ENCODE measurements at regions of chr10 and their contacts with region 1.

Region 1: GRCh38 chr10:102641880-102642735 is 2.2 kb upstream of the TRIM8 start:
- DNase-seq: peak; percentile 98
- H3K4me3 ChIP-seq: peak overlapping the region; percentile 84
- H3K27ac ChIP-seq: peak overlapping the region; percentile 95
- H3K4me1 ChIP-seq: peaks cover 11% of the 10 kb centered on the region
- CTCF ChIP-seq: no peak

Region 2: GRCh38 chr10:101693978-101694673 is 948.0 kb before region 1 on chr10:
- CTCF ChIA-PET with region 1: no interaction called
- POLR2A ChIA-PET with region 1: no interaction called
- intact Hi-C with region 1: loop called (anchors 10 kb)
- DNase-seq: peak; percentile 78
- H3K4me3 ChIP-seq: peak overlapping the region; percentile 81
- H3K27ac ChIP-seq: peak overlapping the region; percentile 75
- H3K4me1 ChIP-seq: peaks cover 28% of the 10 kb centered on the region
- CTCF ChIP-seq: no peak

Region 3: GRCh38 chr10:102132563-102133372 is 509.3 kb before region 1 on chr10 and contains the start of gene PPRC1:
- CTCF ChIA-PET with region 1: no interaction called
- POLR2A ChIA-PET with region 1: no interaction called
- intact Hi-C with region 1: loop called (anchors 5 kb)
- DNase-seq: peak; percentile 99
- H3K4me3 ChIP-seq: peak within 1 kb of the TSS; percentile 87
- H3K27ac ChIP-seq: peak within 1 kb of the TSS; percentile 65
- H3K4me1 ChIP-seq: peaks cover 44% of the 10 kb centered on the region
- CTCF ChIP-seq: peak; percentile 97
- total RNA-seq, gene PPRC1: 29.8 and 47.1 TPM in 2 replicates

Region 4: DNA sequence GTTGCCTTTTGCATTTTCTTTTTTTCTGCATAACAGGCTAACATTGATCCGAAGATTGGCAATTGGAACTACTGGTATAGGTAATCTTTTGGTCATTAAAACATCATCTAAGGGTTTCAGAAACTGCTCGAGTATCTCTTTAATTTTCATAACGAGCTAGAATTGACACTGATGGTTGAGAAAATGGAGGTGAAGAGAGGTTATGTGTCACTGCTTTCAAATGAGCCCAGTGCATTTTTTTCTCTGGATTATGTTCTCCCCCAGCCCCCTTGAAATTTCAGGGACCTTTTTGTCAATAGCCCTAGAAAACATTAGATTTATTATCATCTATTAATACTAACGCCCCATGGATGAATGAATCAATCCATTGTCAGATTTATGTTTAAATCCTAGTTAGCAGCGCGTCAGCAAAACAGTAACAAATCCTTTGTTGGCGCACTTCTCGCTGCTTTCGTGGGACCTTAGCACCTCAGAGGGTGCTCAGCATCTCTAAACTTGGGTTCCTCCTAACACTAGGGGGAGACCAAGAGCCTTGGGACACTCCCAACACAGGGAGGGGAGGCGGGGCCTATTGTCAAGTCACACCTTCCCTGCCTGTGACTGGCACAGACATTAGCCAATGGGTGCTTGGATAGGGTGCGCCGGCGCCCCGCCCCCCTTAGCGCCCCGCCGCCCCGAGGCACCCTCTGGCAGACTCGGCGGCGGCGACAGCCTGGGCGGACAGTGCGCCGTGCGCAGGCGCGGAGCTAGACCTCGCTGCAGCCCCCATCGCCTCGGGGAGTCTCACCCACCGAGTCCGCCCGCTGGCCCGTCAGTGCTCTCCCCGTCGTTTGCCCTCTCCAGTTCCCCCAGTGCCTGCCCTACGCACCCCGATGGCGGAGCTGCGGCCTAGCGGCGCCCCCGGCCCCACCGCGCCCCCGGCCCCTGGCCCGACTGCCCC is 138.6 kb before region 1 on chr10 and contains the start of gene SUFU:
- CTCF ChIA-PET with region 1: no interaction called
- POLR2A ChIA-PET with region 1: interaction called, 3 read pairs
- intact Hi-C with region 1: loop called (anchors 2 kb)
- DNase-seq: peak; percentile 100
- H3K4me3 ChIP-seq: peak within 1 kb of the TSS; percentile 98
- H3K27ac ChIP-seq: peak within 1 kb of the TSS; percentile 64
- H3K4me1 ChIP-seq: peaks cover 20% of the 10 kb centered on the region
- CTCF ChIP-seq: peak; percentile 92
- total RNA-seq, gene SUFU: 1.9 and 4.9 TPM in 2 replicates

Region 5: GRCh38 chr10:102713814-102714620 is 71.9 kb after region 1 on chr10 and contains the start of gene ARL3:
- CTCF ChIA-PET with region 1: interaction called, 3 read pairs
- POLR2A ChIA-PET with region 1: interaction called, 8 read pairs
- intact Hi-C with region 1: loop called (anchors 1 kb)
- DNase-seq: peak; percentile 99
- H3K4me3 ChIP-seq: peak within 1 kb of the TSS; percentile 77
- H3K27ac ChIP-seq: peak within 1 kb of the TSS; percentile 84
- H3K4me1 ChIP-seq: peaks cover 61% of the 10 kb centered on the region
- CTCF ChIP-seq: peak; percentile 67
- total RNA-seq, gene ARL3: 7.3 and 8.1 TPM in 2 replicates

Measured in OCI-LY7 (cell line).